Posterior cingulate gyrus (tissue), 11 donors: ENCODE measurements at regions of chr19 and their contacts with region 1.

Region 1: GRCh38 chr19:6516659-6517291 is 14.1 kb upstream of the TNFSF9 start:
- DNase-seq: peak; percentile 81 to 99 (median 96)

Region 2: DNA sequence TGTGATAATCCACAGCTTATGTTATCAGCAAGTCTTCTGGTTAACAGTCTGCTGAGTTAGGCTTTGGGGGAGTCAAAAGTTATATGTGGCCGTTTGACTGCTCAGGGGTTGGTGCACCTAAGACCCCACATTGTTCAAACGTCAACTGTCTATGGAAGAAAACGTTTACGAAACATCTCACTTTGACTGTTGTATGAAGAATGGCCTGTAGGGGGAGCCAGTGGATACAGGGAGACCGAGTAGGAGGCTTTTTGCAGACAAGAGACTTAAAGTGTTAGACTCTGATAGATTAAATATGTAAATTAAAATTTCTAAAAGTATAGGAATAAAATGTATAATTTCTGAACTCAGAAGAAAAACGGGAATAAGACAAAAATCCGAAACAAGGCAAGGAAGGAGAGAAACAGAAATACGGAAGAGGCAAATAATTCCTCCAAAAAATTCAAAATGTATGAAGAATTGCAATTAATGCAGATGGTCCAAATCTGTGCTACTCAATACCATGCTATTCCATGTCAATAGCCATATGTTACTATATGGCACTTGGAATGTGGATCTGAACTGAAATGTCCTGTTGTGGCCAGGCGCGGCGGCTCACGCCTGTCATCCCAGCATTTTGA is 115.3 kb after region 1 on chr19:
- intact Hi-C with region 1: loop called (anchors 1 kb)
- DNase-seq: peak in 5 of 10 donors; percentile 13 to 74 (median 57)